ENCODE measurements at regions of chr1 and their contacts with region 1.

Region 1: DNA sequence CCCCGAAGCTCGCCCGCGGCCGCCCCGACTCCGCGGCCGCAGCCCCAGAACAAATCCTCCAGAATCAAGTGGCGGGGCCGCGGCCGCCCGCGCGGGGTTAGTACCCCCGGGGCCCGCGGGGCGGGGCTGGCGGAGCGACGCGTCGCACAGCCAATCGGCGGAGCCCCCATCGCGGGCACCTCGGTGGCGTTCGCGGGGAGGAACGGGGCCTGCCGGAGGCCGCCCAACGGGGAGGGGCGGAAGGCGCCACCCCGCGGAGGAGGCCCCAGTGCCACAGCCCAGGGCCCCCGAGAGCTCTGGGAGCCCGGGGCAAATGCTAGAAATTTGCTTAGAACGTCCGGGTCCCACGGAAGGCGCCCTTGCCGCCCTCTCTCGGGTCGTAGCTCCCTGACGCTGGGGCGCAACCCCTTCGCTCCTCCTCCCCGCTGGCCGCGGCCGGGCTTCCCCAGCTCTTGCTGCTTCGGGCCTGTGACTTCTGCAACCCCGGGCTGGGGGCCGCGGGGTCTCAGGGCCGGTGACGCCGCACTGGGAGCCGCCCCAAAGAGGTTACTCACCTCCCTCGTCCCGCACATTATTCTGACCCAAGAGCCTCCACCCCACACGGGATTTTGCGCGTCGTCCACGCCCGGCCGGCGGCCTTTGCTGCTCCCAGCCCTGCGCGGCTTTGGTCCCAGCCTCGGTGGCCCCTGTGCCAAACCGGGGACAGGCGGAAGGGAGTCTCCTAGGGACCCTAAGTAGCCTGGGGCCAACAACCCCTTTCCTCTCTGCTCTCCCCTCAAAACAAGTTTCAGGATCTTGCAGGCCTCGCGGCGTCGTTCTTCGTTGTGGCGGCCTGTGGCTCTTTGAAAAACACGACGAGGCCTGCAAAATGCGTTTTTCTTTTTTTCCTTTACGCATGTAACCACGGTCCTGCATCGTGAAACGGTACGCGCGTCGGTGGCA is at the start of gene RUNX3:
- DNase-seq: peak; percentile 97
- H3K4me3 ChIP-seq: peak within 1 kb of the TSS; percentile 91
- H3K27ac ChIP-seq: peak within 1 kb of the TSS; percentile 72
- H3K4me1 ChIP-seq: peaks cover 70% of the 10 kb centered on the region
- CTCF ChIP-seq: peak; percentile 47
- total RNA-seq, gene RUNX3: 9.5 and 12.2 TPM in 2 replicates

Region 2: DNA sequence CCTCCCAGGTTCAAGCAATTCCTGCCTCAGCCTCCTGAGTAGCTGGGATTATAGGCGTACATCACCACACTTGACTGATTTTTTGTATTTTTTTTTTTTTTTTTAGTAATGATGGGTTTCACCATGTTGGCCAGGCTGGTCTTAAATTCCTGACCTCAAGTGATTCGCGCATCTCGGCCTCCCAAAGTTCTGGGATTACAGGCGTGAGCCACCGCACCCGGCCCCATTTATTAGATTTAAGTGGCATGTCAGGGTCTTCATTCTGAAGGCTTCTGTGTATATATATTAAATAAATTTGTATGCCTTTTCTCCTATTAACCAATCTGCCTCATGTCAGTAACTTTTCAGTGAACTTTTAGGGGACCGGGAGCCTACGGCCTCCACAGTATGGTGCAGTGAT is 191.2 kb before region 1 on chr1:
- CTCF ChIA-PET with region 1: no interaction called
- POLR2A ChIA-PET with region 1: no interaction called
- intact Hi-C with region 1: no loop called
- DNase-seq: no peak
- H3K4me3 ChIP-seq: no peak overlapping the region
- H3K27ac ChIP-seq: no peak overlapping the region
- H3K4me1 ChIP-seq: peaks cover 59% of the 10 kb centered on the region
- CTCF ChIP-seq: no peak

Region 3: GRCh38 chr1:24847995-24848881 is 82.2 kb before region 1 on chr1:
- CTCF ChIA-PET with region 1: no interaction called
- POLR2A ChIA-PET with region 1: interaction called, 3 read pairs
- intact Hi-C with region 1: loop called (anchors 1 kb)
- DNase-seq: peak; percentile 95
- H3K4me3 ChIP-seq: peak overlapping the region; percentile 52
- H3K27ac ChIP-seq: peak overlapping the region; percentile 24
- H3K4me1 ChIP-seq: peaks cover 19% of the 10 kb centered on the region
- CTCF ChIP-seq: peak; percentile 87

Region 4: DNA sequence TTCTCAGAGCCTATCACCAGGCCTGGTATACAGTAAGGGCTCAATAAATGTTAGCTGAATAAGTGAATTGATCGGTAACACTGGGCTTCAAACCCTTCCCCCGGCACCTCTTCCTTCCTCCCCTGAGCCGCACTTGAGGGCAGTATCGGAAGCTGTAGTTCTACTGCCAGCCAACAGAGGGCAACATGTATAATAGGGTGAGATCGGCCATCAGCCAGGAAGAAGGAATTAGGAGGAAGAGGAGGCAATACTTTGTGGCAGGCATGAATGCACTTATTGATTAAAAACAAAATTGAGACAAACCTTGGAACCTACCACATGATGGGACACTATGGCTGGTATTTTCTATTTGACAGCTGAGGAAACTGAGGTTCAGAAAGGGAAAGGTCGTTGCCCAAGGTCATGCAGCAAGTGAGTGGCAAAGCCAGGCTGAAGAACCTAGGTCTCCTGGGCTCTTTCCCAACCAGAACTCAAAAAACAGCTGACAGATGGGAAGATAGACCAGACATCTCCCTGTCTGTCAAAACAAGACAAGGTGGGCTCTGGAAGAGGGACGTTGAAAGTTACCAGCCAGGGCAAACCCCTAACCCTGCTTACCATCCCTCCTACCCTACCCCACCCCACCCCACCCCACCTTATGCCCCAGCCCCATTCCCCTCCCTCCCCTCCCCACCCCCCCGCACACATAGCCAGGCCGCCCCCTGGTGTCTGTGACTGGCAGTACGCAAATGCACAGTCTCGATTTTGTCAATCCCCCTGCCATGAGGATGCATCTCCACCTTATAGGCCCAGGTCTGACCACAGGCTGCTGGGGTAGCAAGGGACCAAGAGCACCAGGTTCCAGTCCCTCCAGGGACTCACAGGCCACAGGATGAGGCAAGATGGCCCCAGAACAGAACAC is 106.9 kb after region 1 on chr1:
- CTCF ChIA-PET with region 1: interaction called, 6 read pairs
- POLR2A ChIA-PET with region 1: no interaction called
- intact Hi-C with region 1: loop called (anchors 1 kb)
- DNase-seq: peak; percentile 73
- H3K4me3 ChIP-seq: no peak overlapping the region
- H3K27ac ChIP-seq: no peak overlapping the region
- H3K4me1 ChIP-seq: peaks cover 24% of the 10 kb centered on the region
- CTCF ChIP-seq: peak; percentile 80

Region 5: DNA sequence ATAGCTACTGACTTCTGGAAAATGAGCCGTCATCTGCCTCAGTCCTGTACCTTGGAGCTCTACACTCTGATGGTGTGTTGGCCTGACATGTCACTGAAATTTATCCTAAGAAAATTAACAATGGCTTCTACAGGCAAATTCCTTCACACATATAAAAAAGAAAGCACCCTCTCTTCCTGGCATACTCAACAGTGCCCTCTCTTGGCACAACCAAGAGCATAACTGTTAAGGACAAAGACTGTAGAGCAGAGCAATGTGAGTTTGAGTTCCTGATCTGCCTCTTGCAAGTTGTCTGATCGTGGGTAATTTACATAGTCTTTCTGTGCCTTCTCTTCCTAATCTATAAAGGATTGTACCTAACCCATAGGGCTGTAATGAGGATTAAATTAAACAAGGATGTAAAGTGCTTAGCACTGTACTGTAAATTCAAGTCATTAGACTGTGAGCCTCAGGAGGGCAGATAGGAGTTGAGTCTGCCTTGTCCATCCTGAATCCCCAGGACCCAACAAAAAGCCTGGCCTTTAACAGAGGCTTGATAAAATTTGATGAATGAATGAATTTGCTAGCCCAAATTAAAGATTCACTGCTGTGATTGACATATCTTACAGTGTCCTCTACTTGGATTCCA is 218.3 kb after region 1 on chr1:
- CTCF ChIA-PET with region 1: interaction called, 3 read pairs
- POLR2A ChIA-PET with region 1: no interaction called
- intact Hi-C with region 1: loop called (anchors 5 kb)
- DNase-seq: peak; percentile 72
- H3K4me3 ChIP-seq: no peak overlapping the region
- H3K27ac ChIP-seq: no peak overlapping the region
- H3K4me1 ChIP-seq: peaks cover 29% of the 10 kb centered on the region
- CTCF ChIP-seq: peak; percentile 91

Region 6: GRCh38 chr1:25239681-25240541 is 309.4 kb after region 1 on chr1:
- CTCF ChIA-PET with region 1: no interaction called
- POLR2A ChIA-PET with region 1: no interaction called
- intact Hi-C with region 1: loop called (anchors 10 kb)
- DNase-seq: peak; percentile 93
- H3K4me3 ChIP-seq: peak overlapping the region; percentile 64
- H3K27ac ChIP-seq: peak overlapping the region; percentile 84
- H3K4me1 ChIP-seq: peaks cover 79% of the 10 kb centered on the region
- CTCF ChIP-seq: peak; percentile 75